T-cell (primary cell): ENCODE measurements at regions of chr2 and their contacts with region 1.

Region 1: DNA sequence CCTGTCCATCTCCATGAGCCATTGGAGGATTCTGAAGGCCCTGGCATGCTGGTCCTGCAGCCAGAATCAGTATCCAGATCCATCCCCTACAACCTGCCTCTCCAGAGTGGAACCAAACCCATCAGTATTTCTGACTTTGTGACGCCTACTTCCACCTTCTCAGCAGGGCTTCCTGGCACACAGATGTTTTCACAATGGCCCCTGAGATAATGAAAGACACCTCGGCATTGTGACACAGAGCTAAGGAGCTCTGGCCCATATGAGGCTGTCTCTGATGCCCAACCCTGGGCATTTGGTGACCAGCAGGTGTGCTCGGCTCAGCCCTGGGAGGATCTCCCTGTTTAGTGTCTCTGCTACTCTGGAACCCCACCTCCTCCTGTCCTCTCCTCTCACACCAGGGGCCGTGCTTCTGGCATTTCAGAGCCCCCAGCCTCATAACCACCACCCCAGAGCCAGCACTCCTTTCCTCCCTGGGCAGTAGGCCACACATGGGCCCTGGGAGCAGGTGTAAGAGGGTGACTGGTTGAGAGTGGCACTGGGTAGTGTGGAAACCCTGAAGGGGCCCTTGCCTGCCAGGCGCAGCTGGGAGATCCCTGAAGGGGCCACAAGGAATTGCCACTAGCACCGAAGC is 38.2 kb downstream of the FOSL2 start:
- DNase-seq: no peak
- ATAC-seq: peak in 1 of 4 experiments; percentile 24
- H3K4me3 ChIP-seq: no peak overlapping the region
- H3K4me3 Mint-ChIP-seq: no peak overlapping the region
- H3K27ac ChIP-seq: peak overlapping the region; percentile 51
- H3K27ac Mint-ChIP-seq: no peak overlapping the region
- H3K4me1 ChIP-seq: peaks cover 0 to 31% of the 10 kb centered on the region in 2 experiments
- H3K4me1 Mint-ChIP-seq: peaks cover 10 to 33% (median 16%) of the 10 kb centered on the region in 3 donors
- H3K27me3 ChIP-seq: no peaks in the 10 kb centered on the region
- H3K27me3 Mint-ChIP-seq: no peaks in the 10 kb centered on the region

Region 2: GRCh38 chr2:28137221-28137620 is 293.7 kb before region 1 on chr2:
- CTCF ChIA-PET with region 1: no interaction called
- POLR2A ChIA-PET with region 1: no interaction called
- DNase-seq: no peak
- ATAC-seq: no peak
- H3K4me3 ChIP-seq: no peak overlapping the region
- H3K4me3 Mint-ChIP-seq: no peak overlapping the region
- H3K27ac ChIP-seq: no peak overlapping the region
- H3K27ac Mint-ChIP-seq: no peak overlapping the region
- H3K4me1 ChIP-seq: peaks cover 8 to 10% of the 10 kb centered on the region in 2 experiments
- H3K4me1 Mint-ChIP-seq: peaks cover 22 to 45% (median 23%) of the 10 kb centered on the region in 3 donors
- H3K27me3 ChIP-seq: no peaks in the 10 kb centered on the region
- H3K27me3 Mint-ChIP-seq: no peaks in the 10 kb centered on the region

Region 3: DNA sequence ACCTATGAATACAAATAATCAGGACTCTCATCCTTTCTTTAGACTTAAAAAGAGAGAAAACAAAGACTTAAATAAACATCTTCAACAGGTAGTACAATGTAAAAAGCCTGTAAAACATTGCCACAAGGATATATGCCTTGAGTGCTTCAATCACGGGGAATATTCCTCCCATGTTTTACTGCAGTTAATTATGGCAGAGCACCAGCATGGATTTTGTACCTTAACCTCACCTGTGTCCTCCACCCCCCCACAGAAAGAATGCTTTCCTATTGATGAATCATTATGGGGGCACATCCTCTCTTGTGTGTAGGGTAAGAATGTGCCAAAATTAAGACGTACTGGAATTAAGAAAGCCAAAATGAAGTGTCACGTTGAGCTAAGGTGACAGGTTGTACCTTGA is 228.2 kb before region 1 on chr2:
- CTCF ChIA-PET with region 1: no interaction called
- POLR2A ChIA-PET with region 1: interaction called in 1 of 2 experiments, 13 read pairs
- DNase-seq: no peak
- ATAC-seq: no peak
- H3K4me3 ChIP-seq: no peak overlapping the region
- H3K4me3 Mint-ChIP-seq: no peak overlapping the region
- H3K27ac ChIP-seq: no peak overlapping the region
- H3K27ac Mint-ChIP-seq: no peak overlapping the region
- H3K4me1 ChIP-seq: no peaks in the 10 kb centered on the region
- H3K4me1 Mint-ChIP-seq: no peaks in the 10 kb centered on the region
- H3K27me3 ChIP-seq: no peaks in the 10 kb centered on the region
- H3K27me3 Mint-ChIP-seq: no peaks in the 10 kb centered on the region

Region 4: GRCh38 chr2:28716265-28716867 is 285.5 kb after region 1 on chr2:
- CTCF ChIA-PET with region 1: no interaction called
- POLR2A ChIA-PET with region 1: interaction called in 1 of 2 experiments, 11 read pairs
- DNase-seq: peak in 1 of 35 experiments; percentile 12
- ATAC-seq: no peak
- H3K4me3 ChIP-seq: no peak overlapping the region
- H3K4me3 Mint-ChIP-seq: no peak overlapping the region
- H3K27ac ChIP-seq: no peak overlapping the region
- H3K27ac Mint-ChIP-seq: no peak overlapping the region
- H3K4me1 ChIP-seq: no peaks in the 10 kb centered on the region
- H3K4me1 Mint-ChIP-seq: peaks cover 3 to 5% (median 5%) of the 10 kb centered on the region in 3 donors
- H3K27me3 ChIP-seq: peaks cover 0 to 6% of the 10 kb centered on the region in 2 experiments
- H3K27me3 Mint-ChIP-seq: no peaks in the 10 kb centered on the region